Esophagus muscularis mucosa (tissue), 4 donors: ENCODE measurements at regions of chr19 and their contacts with region 1.

Region 1: GRCh38 chr19:47608074-47608918 is 638 bp upstream of the BICRA start:
- DNase-seq: peak; percentile 96
- H3K4me3 ChIP-seq: peak overlapping the region; percentile 83 to 100 (median 92)
- H3K27ac ChIP-seq: peak overlapping the region; percentile 97 to 100 (median 99)
- H3K4me1 ChIP-seq: peaks cover 35 to 49% (median 44%) of the 10 kb centered on the region in 4 donors
- H3K27me3 ChIP-seq: no peaks in the 10 kb centered on the region
- CTCF ChIP-seq: peak; percentile 7 to 51 (median 26)
- EP300 ChIP-seq: no peak
- POLR2A ChIP-seq: peak; percentile 88

Region 2: DNA sequence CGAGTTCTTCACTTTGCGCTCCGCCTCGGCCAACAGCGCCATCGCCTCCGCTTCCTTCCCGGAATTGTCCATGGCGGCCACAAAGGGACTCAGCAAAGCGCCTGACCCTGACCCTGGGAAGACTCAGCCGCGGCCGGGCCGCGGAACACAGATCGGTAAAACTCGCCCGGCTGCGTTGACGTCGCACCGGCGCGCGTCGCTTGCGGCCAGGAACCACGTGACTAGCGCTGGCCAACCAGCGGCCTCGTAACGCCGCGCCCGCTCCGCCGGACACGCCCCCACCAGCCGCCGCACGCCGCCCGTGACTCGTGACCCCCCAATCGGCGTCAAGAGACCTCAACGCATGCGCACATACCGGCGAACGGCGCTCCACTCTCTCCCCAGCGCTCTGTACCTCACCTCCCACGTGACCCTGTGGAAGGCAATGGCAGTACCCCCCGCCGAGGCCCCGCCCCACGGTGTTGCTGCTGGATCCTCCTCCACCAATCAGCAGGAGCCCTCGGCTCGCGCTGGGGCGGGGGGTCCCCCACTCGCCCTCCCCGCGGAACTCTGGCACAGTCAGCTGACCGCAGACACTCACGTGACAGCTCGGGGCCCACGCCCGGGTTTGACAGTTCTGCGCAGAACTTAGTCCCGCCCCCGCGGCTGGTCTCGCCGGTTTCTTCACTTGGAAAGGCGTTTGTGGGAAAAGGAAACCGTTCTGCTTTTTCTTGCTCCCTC is 93.3 kb before region 1 on chr19 and contains the start of gene NAPA:
- intact Hi-C with region 1: loop called (anchors 5 kb)
- DNase-seq: peak; percentile 100
- H3K4me3 ChIP-seq: peak within 1 kb of the TSS; percentile 70 to 99 (median 94)
- H3K27ac ChIP-seq: peak within 1 kb of the TSS; percentile 94 to 99 (median 98)
- H3K4me1 ChIP-seq: peaks cover 38 to 52% (median 51%) of the 10 kb centered on the region in 4 donors
- H3K27me3 ChIP-seq: no peaks in the 10 kb centered on the region
- CTCF ChIP-seq: no peak
- EP300 ChIP-seq: no peak
- POLR2A ChIP-seq: peak; percentile 97
- total RNA-seq, gene NAPA: 109 to 164 (median 148) TPM

Region 3: GRCh38 chr19:47526798-47527197 is 81.5 kb before region 1 on chr19:
- intact Hi-C with region 1: no loop called
- DNase-seq: no peak
- H3K4me3 ChIP-seq: no peak overlapping the region
- H3K27ac ChIP-seq: no peak overlapping the region
- H3K4me1 ChIP-seq: peaks cover 7 to 22% (median 14%) of the 10 kb centered on the region in 4 donors
- H3K27me3 ChIP-seq: peaks cover 0 to 5% (median 0%) of the 10 kb centered on the region in 4 donors
- CTCF ChIP-seq: no peak
- EP300 ChIP-seq: no peak
- POLR2A ChIP-seq: no peak

Region 4: GRCh38 chr19:47663841-47664771 is 55.8 kb after region 1 on chr19:
- intact Hi-C with region 1: loop called (anchors 5 kb)
- DNase-seq: peak; percentile 94
- H3K4me3 ChIP-seq: peak overlapping the region; percentile 14 to 33 (median 24)
- H3K27ac ChIP-seq: peak overlapping the region; percentile 93 to 97 (median 96)
- H3K4me1 ChIP-seq: peaks cover 86 to 98% (median 96%) of the 10 kb centered on the region in 4 donors
- H3K27me3 ChIP-seq: no peaks in the 10 kb centered on the region
- CTCF ChIP-seq: no peak
- EP300 ChIP-seq: peak; percentile 95
- POLR2A ChIP-seq: no peak

Region 5: GRCh38 chr19:47697863-47698609 is 89.7 kb after region 1 on chr19:
- intact Hi-C with region 1: loop called (anchors 2 kb)
- DNase-seq: no peak
- H3K4me3 ChIP-seq: no peak overlapping the region
- H3K27ac ChIP-seq: peak overlapping the region; percentile 72 to 82 (median 80)
- H3K4me1 ChIP-seq: peaks cover 6 to 21% (median 14%) of the 10 kb centered on the region in 4 donors
- H3K27me3 ChIP-seq: no peaks in the 10 kb centered on the region
- CTCF ChIP-seq: peak in 2 of 3 experiments; percentile 97 to 98
- EP300 ChIP-seq: no peak
- POLR2A ChIP-seq: no peak

Region 6: GRCh38 chr19:47839913-47840312 is 231.6 kb after region 1 on chr19:
- intact Hi-C with region 1: no loop called
- DNase-seq: no peak
- H3K4me3 ChIP-seq: no peak overlapping the region
- H3K27ac ChIP-seq: no peak overlapping the region
- H3K4me1 ChIP-seq: no peaks in the 10 kb centered on the region
- H3K27me3 ChIP-seq: peaks cover 0 to 42% (median 0%) of the 10 kb centered on the region in 4 donors
- CTCF ChIP-seq: no peak
- EP300 ChIP-seq: no peak
- POLR2A ChIP-seq: no peak